Adrenal gland (tissue), 19 donors: ENCODE measurements at regions of chr13 and their contacts with region 1.

Region 1: DNA sequence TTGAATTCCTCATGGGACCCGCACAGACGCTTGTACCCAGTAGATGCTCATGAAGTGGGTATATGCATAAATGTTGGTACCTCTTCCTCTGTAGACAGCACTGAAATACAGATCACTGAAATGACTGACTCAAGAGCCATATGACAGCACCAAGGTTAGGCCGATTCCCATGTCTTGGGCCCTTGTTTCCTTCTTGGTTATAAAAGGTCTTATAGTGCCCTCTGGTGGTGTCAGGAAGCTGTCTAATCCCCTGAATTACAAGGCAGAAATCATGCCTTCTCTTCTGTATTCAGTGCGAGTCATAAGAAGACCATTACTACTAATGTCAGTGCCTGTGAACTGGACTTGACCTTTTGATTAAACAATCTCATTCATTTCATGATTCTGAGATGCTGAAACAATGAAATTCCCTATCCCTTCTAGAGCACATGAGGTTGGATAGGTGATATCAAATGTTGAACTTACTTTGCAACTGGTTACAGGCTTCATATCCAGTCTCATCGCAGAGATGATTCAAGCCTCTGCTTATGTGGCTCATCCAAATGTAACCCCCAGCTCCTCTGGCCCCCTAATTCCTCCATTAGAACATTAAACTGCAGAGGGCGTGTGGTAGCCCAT is 59.7 kb downstream of the SPATA13 start:
- DNase-seq: peak; percentile 63 to 86 (median 73)
- H3K4me3 ChIP-seq: no peak overlapping the region
- H3K27ac ChIP-seq: peak overlapping the region in 2 of 5 donors; percentile 53 to 67
- H3K4me1 ChIP-seq: peaks cover 24 to 57% of the 10 kb centered on the region in 2 donors
- H3K27me3 ChIP-seq: no peaks in the 10 kb centered on the region
- CTCF ChIP-seq: peak; percentile 50 to 93 (median 88)
- POLR2A ChIP-seq: no peak

Region 2: DNA sequence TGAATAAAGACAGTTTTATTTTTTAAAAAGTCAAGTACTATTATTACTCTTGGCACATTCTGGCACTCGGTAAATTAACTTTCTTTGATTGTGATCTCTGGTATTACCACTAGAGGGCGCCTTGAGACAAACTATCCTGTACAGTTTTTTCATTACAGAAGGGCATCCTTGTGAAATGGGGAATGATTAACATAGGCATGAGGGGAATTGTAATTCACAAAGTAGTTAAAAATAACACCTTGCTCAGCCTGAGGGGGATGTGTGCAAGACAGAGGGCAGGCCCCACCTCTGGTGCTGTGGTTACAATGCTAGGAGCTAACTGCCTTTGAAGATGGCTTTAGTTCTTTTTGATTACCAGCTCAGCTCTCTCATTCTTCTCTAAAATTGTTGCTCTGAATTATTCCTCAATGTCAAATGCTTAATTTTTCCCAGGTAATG is 298.7 kb before region 1 on chr13:
- intact Hi-C with region 1: loop called in 1 of 2 experiments (anchors 5 kb)
- DNase-seq: no peak
- H3K4me3 ChIP-seq: no peak overlapping the region
- H3K27ac ChIP-seq: no peak overlapping the region
- H3K4me1 ChIP-seq: no peaks in the 10 kb centered on the region
- H3K27me3 ChIP-seq: no peaks in the 10 kb centered on the region
- CTCF ChIP-seq: peak; percentile 39 to 70 (median 63)
- POLR2A ChIP-seq: no peak

Region 3: GRCh38 chr13:23945612-23946011 is 274.6 kb before region 1 on chr13:
- intact Hi-C with region 1: no loop called
- DNase-seq: no peak
- H3K4me3 ChIP-seq: no peak overlapping the region
- H3K27ac ChIP-seq: no peak overlapping the region
- H3K4me1 ChIP-seq: no peaks in the 10 kb centered on the region
- H3K27me3 ChIP-seq: peaks cover 6% of the 10 kb centered on the region
- CTCF ChIP-seq: no peak
- POLR2A ChIP-seq: no peak

Region 4: GRCh38 chr13:24016046-24016445 is 204.1 kb before region 1 on chr13:
- intact Hi-C with region 1: loop called in 1 of 2 experiments (anchors 5 kb)
- DNase-seq: peak in 1 of 7 donors; percentile 31
- H3K4me3 ChIP-seq: no peak overlapping the region
- H3K27ac ChIP-seq: no peak overlapping the region
- H3K4me1 ChIP-seq: no peaks in the 10 kb centered on the region
- H3K27me3 ChIP-seq: no peaks in the 10 kb centered on the region
- CTCF ChIP-seq: no peak
- POLR2A ChIP-seq: no peak

Region 5: GRCh38 chr13:24053519-24054251 is 166.5 kb before region 1 on chr13:
- intact Hi-C with region 1: loop called (anchors 10 kb)
- DNase-seq: peak; percentile 68 to 86 (median 78)
- H3K4me3 ChIP-seq: no peak overlapping the region
- H3K27ac ChIP-seq: peak overlapping the region in 3 of 5 donors; percentile 47 to 85 (median 71)
- H3K4me1 ChIP-seq: peaks cover 0 to 24% of the 10 kb centered on the region in 2 donors
- H3K27me3 ChIP-seq: no peaks in the 10 kb centered on the region
- CTCF ChIP-seq: peak; percentile 50 to 82 (median 76)
- POLR2A ChIP-seq: no peak

Region 6: GRCh38 chr13:24160454-24161009 is 59.7 kb before region 1 on chr13 and contains the start of gene SPATA13:
- intact Hi-C with region 1: loop called (anchors 5 to 10 kb)
- DNase-seq: peak; percentile 93 to 97 (median 96)
- H3K4me3 ChIP-seq: peak within 1 kb of the TSS; percentile 49 to 91 (median 72)
- H3K27ac ChIP-seq: peak within 1 kb of the TSS in 4 of 5 donors; percentile 13 to 86 (median 56)
- H3K4me1 ChIP-seq: peaks cover 12 to 28% of the 10 kb centered on the region in 2 donors
- H3K27me3 ChIP-seq: no peaks in the 10 kb centered on the region
- CTCF ChIP-seq: no peak
- POLR2A ChIP-seq: peak in 1 of 2 donors; percentile 87
- total RNA-seq, gene SPATA13: 20.0 to 85.5 (median 39.5) TPM